Lower leg skin (tissue), 4 donors: ENCODE measurements at regions of chr1 and their contacts with region 1.

Region 1: GRCh38 chr1:906600-907420 is 16.9 kb upstream of the SAMD11 start:
- DNase-seq: peak in 1 of 2 donors; percentile 85
- H3K4me3 ChIP-seq: no peak overlapping the region
- CTCF ChIP-seq: no peak
- POLR2A ChIP-seq: no peak

Region 2: DNA sequence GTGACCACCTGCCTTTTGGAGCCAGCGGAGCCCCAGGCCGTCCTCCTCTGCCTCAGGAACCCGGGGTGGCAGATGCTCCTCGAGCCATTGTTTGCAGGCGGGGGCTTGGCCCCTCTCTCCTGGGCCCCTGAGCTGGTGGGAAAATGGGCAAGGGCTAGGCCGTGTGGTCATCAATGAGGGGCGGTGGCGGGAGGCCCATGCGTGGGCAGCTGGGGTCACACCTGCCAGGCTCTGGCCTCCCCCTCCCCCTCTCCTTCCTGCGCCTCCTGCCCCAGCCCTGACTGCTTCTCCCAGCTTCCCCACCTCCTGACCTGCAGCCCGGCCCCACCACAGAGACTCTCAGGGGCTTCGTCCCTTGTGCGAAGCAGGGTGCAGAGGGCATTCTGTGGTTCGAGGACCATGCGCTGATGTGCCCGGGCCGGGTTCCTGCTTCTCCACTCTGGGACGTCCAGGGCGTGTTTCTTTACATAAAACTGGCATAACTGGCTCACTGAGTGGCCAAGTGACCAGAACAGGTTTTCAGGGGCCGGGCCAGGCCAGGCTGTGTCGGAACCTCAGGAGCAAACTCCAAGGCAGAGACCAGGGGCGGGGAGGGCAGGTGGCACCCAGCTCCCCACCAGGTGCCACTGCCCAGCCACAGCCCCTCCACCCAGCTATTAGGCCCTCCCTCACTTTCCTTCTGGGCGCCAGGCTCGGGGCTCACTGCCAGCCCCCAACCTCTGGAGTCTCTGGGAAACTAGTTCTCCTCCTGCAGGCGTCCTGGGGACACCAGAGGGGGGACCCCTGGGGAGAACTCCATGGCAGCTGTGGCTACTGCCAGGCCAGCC is 26.2 kb after region 1 on chr1:
- intact Hi-C with region 1: loop called (anchors 2 kb)
- DNase-seq: no peak
- H3K4me3 ChIP-seq: no peak overlapping the region
- CTCF ChIP-seq: no peak
- POLR2A ChIP-seq: no peak